ENCODE measurements at regions of chr1 and their contacts with region 1.

Region 1: GRCh38 chr1:93179886-93180722 is at the start of gene TMED5:
- DNase-seq: peak; percentile 98
- ATAC-seq: peak; percentile 85
- H3K4me3 Mint-ChIP-seq: peak within 1 kb of the TSS; percentile 89
- H3K27ac Mint-ChIP-seq: peak within 1 kb of the TSS; percentile 99
- H3K4me1 Mint-ChIP-seq: peaks cover 41% of the 10 kb centered on the region
- H3K27me3 Mint-ChIP-seq: no peaks in the 10 kb centered on the region
- total RNA-seq, gene TMED5: 32.6 to 33.0 TPM

Region 2: DNA sequence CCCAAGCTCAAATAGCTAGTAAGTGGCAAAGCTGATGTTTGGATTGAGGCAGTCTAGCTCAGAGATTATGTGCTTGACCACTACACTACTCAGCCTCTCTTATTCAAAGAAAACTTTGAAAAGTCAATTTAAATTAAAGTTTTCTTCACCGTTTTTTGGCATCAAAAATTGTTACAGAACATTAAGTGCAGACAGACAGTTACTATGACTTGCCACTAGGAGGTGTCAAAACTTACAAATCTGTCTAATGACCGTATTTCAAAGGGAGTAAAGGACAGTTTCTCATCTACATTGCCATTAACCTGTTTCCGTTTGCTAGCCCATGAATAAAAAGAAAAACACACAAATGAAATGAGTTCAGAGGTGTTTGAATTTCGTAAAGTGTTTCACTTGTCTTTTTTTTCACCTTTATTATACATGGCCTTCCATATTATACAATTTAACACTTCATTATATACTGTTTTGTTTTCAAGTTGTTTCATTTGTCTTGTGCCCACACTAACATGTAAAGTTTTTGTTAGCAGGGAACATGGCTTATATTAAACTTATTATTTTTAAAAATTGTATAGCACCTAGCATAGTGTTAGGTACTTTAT is 158.5 kb before region 1 on chr1:
- CTCF ChIA-PET with region 1: no interaction called
- POLR2A ChIA-PET with region 1: no interaction called
- intact Hi-C with region 1: loop called in 1 of 2 experiments (anchors 10 kb)
- DNase-seq: no peak
- ATAC-seq: peak; percentile 72
- H3K4me3 Mint-ChIP-seq: no peak overlapping the region
- H3K27ac Mint-ChIP-seq: no peak overlapping the region
- H3K4me1 Mint-ChIP-seq: no peaks in the 10 kb centered on the region
- H3K27me3 Mint-ChIP-seq: peaks cover 3% of the 10 kb centered on the region

Region 3: GRCh38 chr1:93078986-93079654 is 101.0 kb before region 1 on chr1 and contains the start of gene MTF2:
- CTCF ChIA-PET with region 1: interaction called, 7 read pairs
- POLR2A ChIA-PET with region 1: interaction called, 6 read pairs
- intact Hi-C with region 1: loop called (anchors 1 kb)
- DNase-seq: peak; percentile 97
- ATAC-seq: peak; percentile 91
- H3K4me3 Mint-ChIP-seq: peak within 1 kb of the TSS; percentile 94
- H3K27ac Mint-ChIP-seq: peak within 1 kb of the TSS; percentile 94
- H3K4me1 Mint-ChIP-seq: peaks cover 29% of the 10 kb centered on the region
- H3K27me3 Mint-ChIP-seq: no peaks in the 10 kb centered on the region
- total RNA-seq, gene MTF2: 49.8 to 55.0 TPM

Region 4: DNA sequence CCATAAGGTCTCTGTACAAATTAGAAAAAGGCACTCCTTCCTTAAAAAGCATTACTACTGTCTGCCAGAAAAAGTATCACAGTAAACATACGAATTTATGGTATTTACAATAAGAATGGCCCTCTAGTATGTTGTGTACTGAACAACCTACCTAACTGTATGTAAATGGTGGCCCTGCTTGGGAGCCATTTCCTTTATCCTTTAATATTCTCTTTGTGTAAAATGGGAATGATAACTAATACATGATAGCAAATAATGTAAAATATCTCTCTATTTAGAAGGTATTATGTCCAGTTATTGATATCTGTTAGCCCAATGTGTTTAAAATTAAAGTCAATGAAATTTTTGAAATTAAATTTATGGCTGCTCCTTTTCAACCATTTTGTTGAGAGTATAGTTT is 170.8 kb after region 1 on chr1:
- CTCF ChIA-PET with region 1: no interaction called
- POLR2A ChIA-PET with region 1: no interaction called
- intact Hi-C with region 1: no loop called
- DNase-seq: no peak
- ATAC-seq: no peak
- H3K4me3 Mint-ChIP-seq: no peak overlapping the region
- H3K27ac Mint-ChIP-seq: no peak overlapping the region
- H3K4me1 Mint-ChIP-seq: peaks cover 50% of the 10 kb centered on the region
- H3K27me3 Mint-ChIP-seq: no peaks in the 10 kb centered on the region

Region 5: DNA sequence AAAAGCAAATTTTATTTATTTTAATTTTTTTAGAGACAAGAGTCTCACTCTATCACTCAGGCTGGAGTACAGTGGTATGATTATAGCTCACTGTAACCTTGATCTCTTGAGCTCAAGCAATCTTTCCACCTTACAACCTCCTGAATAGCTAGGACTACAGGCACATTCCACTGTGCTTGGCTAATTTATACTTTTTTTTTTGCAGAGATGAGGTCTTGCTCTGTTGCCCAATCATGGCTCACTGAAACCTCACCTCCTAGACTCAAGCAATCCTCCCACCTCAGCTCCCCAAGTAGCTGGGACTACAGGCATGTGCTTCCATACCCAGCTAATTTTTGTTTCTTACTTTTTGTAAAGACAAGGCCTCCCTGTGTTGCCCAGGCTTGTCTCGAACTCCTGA is 215.1 kb after region 1 on chr1:
- CTCF ChIA-PET with region 1: no interaction called
- POLR2A ChIA-PET with region 1: no interaction called
- intact Hi-C with region 1: no loop called
- DNase-seq: no peak
- ATAC-seq: no peak
- H3K4me3 Mint-ChIP-seq: no peak overlapping the region
- H3K27ac Mint-ChIP-seq: no peak overlapping the region
- H3K4me1 Mint-ChIP-seq: no peaks in the 10 kb centered on the region
- H3K27me3 Mint-ChIP-seq: no peaks in the 10 kb centered on the region

Region 6: GRCh38 chr1:93607814-93608186 is 427.7 kb after region 1 on chr1:
- CTCF ChIA-PET with region 1: no interaction called
- POLR2A ChIA-PET with region 1: interaction called, 3 read pairs
- intact Hi-C with region 1: loop called in 1 of 2 experiments (anchors 5 kb)
- DNase-seq: peak; percentile 82
- ATAC-seq: peak; percentile 95
- H3K4me3 Mint-ChIP-seq: no peak overlapping the region
- H3K27ac Mint-ChIP-seq: peak overlapping the region; percentile 63
- H3K4me1 Mint-ChIP-seq: peaks cover 43% of the 10 kb centered on the region
- H3K27me3 Mint-ChIP-seq: peaks cover 16% of the 10 kb centered on the region

Region 7: GRCh38 chr1:93909146-93910050 is 729.3 kb after region 1 on chr1 and contains the start of gene GCLM:
- CTCF ChIA-PET with region 1: no interaction called
- POLR2A ChIA-PET with region 1: no interaction called
- intact Hi-C with region 1: loop called in 1 of 2 experiments (anchors 1 kb)
- DNase-seq: peak; percentile 93
- ATAC-seq: peak; percentile 84
- H3K4me3 Mint-ChIP-seq: peak within 1 kb of the TSS; percentile 96
- H3K27ac Mint-ChIP-seq: peak within 1 kb of the TSS; percentile 97
- H3K4me1 Mint-ChIP-seq: peaks cover 34% of the 10 kb centered on the region
- H3K27me3 Mint-ChIP-seq: peaks cover 5% of the 10 kb centered on the region
- total RNA-seq, gene GCLM: 12.8 to 19.2 TPM